ENCODE measurements at regions of chr10 and their contacts with region 1.

Region 1: GRCh38 chr10:5094265-5095205 is at the start of gene AKR1C3:
- DNase-seq: peak; percentile 74
- H3K4me3 Mint-ChIP-seq: peak within 1 kb of the TSS; percentile 56
- H3K27ac Mint-ChIP-seq: no peak within 1 kb of the TSS
- H3K4me1 Mint-ChIP-seq: peaks cover 5% of the 10 kb centered on the region
- H3K27me3 Mint-ChIP-seq: peaks cover 12% of the 10 kb centered on the region
- total RNA-seq, gene AKR1C3: not detected in 2 replicates

Region 2: DNA sequence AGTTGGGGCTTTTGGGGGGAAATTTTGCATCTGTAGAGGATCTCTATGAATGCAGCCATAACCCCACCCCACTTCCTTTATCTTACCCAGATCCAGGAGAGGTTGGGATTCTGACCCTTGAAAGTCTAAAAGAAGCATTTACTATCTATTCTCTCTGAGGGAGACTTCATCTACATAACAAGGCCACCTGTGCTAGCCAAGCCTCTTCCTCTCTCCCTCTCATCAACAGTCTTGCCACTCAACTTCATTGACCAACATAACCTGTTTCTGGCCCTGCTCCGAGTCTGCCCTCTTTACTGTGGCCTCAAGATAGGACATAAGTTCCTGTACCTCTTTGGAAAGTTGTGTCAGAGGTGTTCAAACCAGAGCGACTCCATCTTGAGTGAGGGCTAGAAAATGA is 290.7 kb after region 1 on chr10:
- intact Hi-C with region 1: loop called (anchors 5 kb)
- DNase-seq: no peak
- H3K4me3 Mint-ChIP-seq: no peak overlapping the region
- H3K27ac Mint-ChIP-seq: no peak overlapping the region
- H3K4me1 Mint-ChIP-seq: no peaks in the 10 kb centered on the region
- H3K27me3 Mint-ChIP-seq: no peaks in the 10 kb centered on the region

Measured in activated CD4-positive, alpha-beta T cell treated with anti-CD3 and anti-CD28 coated beads, Interleukin-2, amount 10 ng/mL, durations not matched to agents 24 days and 14 days (primary cell).